HepG2 (cell line): ENCODE measurements at regions of chr2 and their contacts with region 1.

Region 1: GRCh38 chr2:30115141-30115980 is 31.4 kb upstream of the YPEL5 start:
- DNase-seq: peak; percentile 77
- ATAC-seq: peak; percentile 88
- H3K4me3 ChIP-seq: no peak overlapping the region
- H3K27ac ChIP-seq: no peak overlapping the region
- H3K4me1 ChIP-seq: peaks cover 13% of the 10 kb centered on the region
- H3K27me3 ChIP-seq: peaks cover 0 to 14% of the 10 kb centered on the region in 2 experiments; a peak in 3 of 5 replicates
- CTCF ChIP-seq: peak; percentile 97
- EP300 ChIP-seq: no peak
- POLR2A ChIP-seq: no peak
- RAD21 ChIP-seq: peak; percentile 92

Region 2: DNA sequence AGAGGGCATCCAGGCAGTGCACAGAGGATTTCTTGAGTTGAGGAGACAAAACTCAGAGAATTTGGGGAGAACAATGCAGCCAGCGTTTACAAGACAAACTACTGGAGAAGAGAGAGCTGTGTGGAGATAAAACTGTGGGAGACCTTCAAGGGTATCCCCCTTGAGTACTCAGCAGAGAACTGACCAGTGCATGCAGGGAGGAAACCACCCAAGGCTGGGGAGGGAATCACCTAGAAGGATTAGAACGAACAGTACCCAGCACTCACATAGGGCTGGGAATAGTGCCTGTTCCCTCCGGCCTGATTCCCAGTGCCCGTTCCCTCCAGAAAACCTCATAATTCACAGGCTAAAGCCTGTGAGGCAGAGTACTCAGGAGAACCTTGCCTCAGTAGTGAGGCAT is 30.4 kb before region 1 on chr2:
- CTCF ChIA-PET with region 1: interaction called, 106 read pairs
- POLR2A ChIA-PET with region 1: no interaction called
- in situ Hi-C with region 1: loop called (anchors 5 kb)
- intact Hi-C with region 1: loop called (anchors 5 kb)
- DNase-seq: no peak
- ATAC-seq: no peak
- H3K4me3 ChIP-seq: no peak overlapping the region
- H3K27ac ChIP-seq: no peak overlapping the region
- H3K4me1 ChIP-seq: no peaks in the 10 kb centered on the region
- H3K27me3 ChIP-seq: peaks cover 0 to 27% of the 10 kb centered on the region in 2 experiments; a peak in 3 of 5 replicates
- CTCF ChIP-seq: no peak
- EP300 ChIP-seq: no peak
- POLR2A ChIP-seq: no peak
- RAD21 ChIP-seq: no peak

Region 3: GRCh38 chr2:30098266-30099005 is 16.9 kb before region 1 on chr2:
- CTCF ChIA-PET with region 1: interaction called, 106 read pairs
- POLR2A ChIA-PET with region 1: no interaction called
- in situ Hi-C with region 1: no loop called
- intact Hi-C with region 1: no loop called
- DNase-seq: no peak
- ATAC-seq: no peak
- H3K4me3 ChIP-seq: no peak overlapping the region
- H3K27ac ChIP-seq: no peak overlapping the region
- H3K4me1 ChIP-seq: no peaks in the 10 kb centered on the region
- H3K27me3 ChIP-seq: peaks cover 0 to 26% of the 10 kb centered on the region in 2 experiments; a peak in 3 of 5 replicates
- CTCF ChIP-seq: no peak
- EP300 ChIP-seq: no peak
- POLR2A ChIP-seq: no peak
- RAD21 ChIP-seq: no peak